ENCODE measurements at regions of chr1 and their contacts with region 1.

Region 1: GRCh38 chr1:119675349-119676345 is 27.6 kb upstream of the ZNF697 start:
- DNase-seq: peak; percentile 88
- ATAC-seq: peak; percentile 93
- H3K4me3 ChIP-seq: peak overlapping the region; percentile 46
- H3K27ac ChIP-seq: no peak overlapping the region
- H3K4me1 ChIP-seq: no peaks in the 10 kb centered on the region
- H3K27me3 ChIP-seq: peaks cover 9% of the 10 kb centered on the region
- CTCF ChIP-seq: peak; percentile 86
- POLR2A ChIP-seq: no peak
- RAD21 ChIP-seq: peak; percentile 68

Region 2: DNA sequence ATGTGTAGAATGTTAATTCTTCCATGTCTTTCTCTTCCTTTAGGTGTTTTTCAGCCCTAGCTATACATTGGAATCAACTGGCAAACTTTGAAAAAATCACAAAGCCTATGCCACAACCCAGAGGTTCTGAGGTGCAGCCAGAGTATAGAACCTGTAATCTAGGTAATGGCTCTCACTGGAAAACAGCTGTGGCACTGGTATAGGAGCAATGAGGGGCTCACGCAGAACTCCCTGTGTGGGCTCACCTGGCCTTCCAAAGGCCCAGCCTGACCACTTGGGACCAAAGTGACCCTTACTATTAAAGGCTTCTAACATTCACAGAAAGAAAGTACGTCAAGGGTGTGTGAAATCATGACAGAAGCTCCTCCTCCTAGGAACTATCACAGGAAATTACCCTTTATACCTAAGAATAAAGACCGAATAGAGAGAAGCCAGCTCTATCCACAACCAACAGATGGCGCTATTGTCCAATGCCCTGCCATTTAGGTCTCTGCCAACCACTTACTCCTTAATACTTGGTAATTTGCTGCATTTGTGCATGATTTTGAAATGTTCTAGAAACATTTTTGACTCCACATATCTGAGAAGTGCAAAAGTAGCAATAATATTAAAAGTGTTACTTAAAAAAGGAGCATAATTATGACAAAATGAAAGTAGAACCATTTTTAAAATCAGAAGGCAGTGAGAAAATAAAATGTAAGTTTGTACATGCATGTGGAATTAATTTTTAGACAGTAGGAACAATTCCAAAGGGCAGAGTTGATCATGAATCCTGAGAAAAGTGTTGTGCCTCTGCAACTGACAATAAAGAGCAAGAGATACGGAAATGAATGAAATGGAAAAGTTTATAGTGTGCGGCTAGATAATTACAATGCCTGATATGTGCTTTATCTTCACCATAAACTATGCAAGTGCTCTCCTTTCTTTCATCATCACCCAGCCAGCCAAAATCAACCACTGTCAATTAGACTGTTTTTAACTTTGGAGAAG is 400.2 kb before region 1 on chr1:
- CTCF ChIA-PET with region 1: no interaction called
- POLR2A ChIA-PET with region 1: no interaction called
- dilution Hi-C with region 1: no loop called
- in situ Hi-C with region 1: loop called (anchors 25 kb)
- intact Hi-C with region 1: no loop called
- DNase-seq: peak; percentile 67
- ATAC-seq: peak; percentile 92
- H3K4me3 ChIP-seq: no peak overlapping the region
- H3K27ac ChIP-seq: no peak overlapping the region
- H3K4me1 ChIP-seq: peaks cover 4% of the 10 kb centered on the region
- H3K27me3 ChIP-seq: peaks cover 2% of the 10 kb centered on the region
- CTCF ChIP-seq: peak; percentile 91
- POLR2A ChIP-seq: no peak
- RAD21 ChIP-seq: peak; percentile 82

Region 3: GRCh38 chr1:119582801-119583200 is 92.8 kb before region 1 on chr1:
- CTCF ChIA-PET with region 1: no interaction called
- POLR2A ChIA-PET with region 1: no interaction called
- dilution Hi-C with region 1: no loop called
- in situ Hi-C with region 1: no loop called
- intact Hi-C with region 1: loop called (anchors 1 kb)
- DNase-seq: peak; percentile 55
- ATAC-seq: peak; percentile 98
- H3K4me3 ChIP-seq: no peak overlapping the region
- H3K27ac ChIP-seq: no peak overlapping the region
- H3K4me1 ChIP-seq: no peaks in the 10 kb centered on the region
- H3K27me3 ChIP-seq: peaks cover 12% of the 10 kb centered on the region
- CTCF ChIP-seq: peak; percentile 69
- POLR2A ChIP-seq: no peak
- RAD21 ChIP-seq: peak; percentile 77

Region 4: DNA sequence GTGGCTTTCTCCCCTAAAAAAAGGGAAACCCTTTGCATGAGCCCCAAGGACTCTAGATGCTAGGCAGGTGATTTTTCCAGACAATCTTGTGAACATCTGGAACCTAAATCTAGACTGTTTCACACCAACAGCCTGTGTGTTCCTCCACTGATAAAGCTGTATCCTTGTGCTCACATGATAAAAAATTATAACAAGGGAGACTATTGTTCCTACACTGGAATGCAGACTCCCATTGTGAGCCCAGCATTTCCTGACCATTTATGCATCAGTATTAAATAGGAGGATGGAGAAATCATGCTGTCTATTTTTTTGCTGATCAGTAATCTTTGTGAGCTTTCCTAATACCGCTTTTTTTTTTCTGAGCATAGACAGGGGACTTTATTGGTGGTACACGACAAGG is 80.0 kb before region 1 on chr1:
- CTCF ChIA-PET with region 1: no interaction called
- POLR2A ChIA-PET with region 1: no interaction called
- dilution Hi-C with region 1: no loop called
- in situ Hi-C with region 1: no loop called
- intact Hi-C with region 1: no loop called
- DNase-seq: no peak
- ATAC-seq: no peak
- H3K4me3 ChIP-seq: no peak overlapping the region
- H3K27ac ChIP-seq: no peak overlapping the region
- H3K4me1 ChIP-seq: no peaks in the 10 kb centered on the region
- H3K27me3 ChIP-seq: peaks cover 4% of the 10 kb centered on the region
- CTCF ChIP-seq: no peak
- POLR2A ChIP-seq: no peak
- RAD21 ChIP-seq: no peak

Region 5: DNA sequence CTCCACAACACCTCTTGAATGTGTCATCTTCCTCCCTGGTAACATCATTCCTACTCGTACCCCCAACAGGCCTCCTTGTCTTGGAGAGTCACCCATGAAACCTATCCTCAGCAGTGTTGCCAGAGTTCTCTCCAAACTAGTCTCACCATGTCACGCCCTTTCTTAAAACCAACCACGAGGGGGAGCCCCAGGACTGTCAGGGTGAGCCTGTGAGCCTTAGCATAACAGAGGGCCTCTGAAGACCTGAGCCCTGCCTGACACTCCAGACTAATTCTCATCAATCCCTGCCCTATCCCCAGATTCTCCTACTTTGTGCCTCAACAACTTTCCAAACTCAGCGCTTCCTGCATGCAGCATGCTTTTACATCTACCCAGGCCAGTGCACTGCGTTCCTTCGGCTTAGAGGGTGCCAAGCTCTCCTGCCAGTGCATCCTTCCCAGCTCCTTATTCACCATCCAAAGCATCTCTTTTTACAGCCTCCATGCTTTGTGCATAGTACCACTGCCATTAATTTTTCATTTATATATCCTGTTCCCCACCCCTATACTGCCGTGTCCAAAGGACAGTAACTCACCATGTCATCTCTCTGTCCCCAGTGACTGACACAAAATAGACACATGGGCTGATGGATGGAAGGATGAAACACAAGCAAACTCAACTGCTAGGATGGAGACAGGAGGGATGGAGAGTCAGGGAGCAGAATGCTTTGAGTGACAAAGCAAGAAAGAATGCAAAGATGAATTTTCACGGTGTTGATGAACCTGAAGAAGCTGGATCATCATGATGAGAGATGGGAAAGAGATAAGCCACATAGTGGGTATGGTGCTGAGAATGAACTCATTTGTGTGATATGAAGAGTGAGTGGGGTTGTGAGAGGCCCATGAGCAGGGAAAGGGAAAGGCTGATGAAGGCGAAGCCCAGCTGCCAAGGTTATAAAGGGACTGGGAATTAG is 61.6 kb before region 1 on chr1:
- CTCF ChIA-PET with region 1: interaction called, 14 read pairs
- POLR2A ChIA-PET with region 1: no interaction called
- dilution Hi-C with region 1: no loop called
- in situ Hi-C with region 1: no loop called
- intact Hi-C with region 1: loop called (anchors 1 kb)
- DNase-seq: peak; percentile 83
- ATAC-seq: peak; percentile 92
- H3K4me3 ChIP-seq: no peak overlapping the region
- H3K27ac ChIP-seq: no peak overlapping the region
- H3K4me1 ChIP-seq: peaks cover 2% of the 10 kb centered on the region; the same call in 1 of the 2 replicates
- H3K27me3 ChIP-seq: peaks cover 3% of the 10 kb centered on the region; the same call in 1 of the 2 replicates
- CTCF ChIP-seq: peak; percentile 88
- POLR2A ChIP-seq: no peak
- RAD21 ChIP-seq: peak; percentile 93

Region 6: DNA sequence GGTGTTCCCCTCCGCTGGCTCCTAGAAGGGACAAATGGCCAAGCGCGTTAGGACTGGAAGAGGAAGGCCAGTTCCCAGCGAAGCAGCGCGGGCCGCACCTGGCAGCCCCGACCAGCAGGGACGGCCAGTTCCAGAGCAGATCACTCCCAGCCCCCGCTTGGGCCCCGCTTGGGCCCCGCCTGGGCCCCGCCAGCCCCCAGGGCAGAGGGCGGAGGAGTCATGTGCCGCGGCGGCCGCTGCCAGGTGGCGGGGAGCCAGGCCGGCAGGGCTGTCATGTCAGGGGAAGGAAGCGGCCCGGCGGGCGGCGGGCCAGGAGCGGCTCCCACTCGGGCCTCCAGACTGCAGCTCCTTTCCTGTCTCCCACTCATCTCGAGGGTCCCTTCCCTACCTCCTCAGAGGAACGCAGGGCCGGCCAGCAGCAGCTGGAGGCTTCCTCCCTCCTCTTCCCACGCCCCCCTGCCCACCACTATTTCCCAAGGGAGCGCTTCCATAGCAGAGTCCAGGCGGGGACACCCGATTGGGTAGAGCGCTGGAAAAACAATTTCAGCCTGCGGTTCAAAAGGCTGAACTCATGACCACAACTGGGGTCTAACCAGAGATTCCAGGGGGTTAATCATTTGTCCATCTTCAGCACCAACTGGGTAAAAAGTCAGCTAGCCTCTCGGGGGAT is 44.1 kb before region 1 on chr1:
- CTCF ChIA-PET with region 1: no interaction called
- POLR2A ChIA-PET with region 1: no interaction called
- dilution Hi-C with region 1: no loop called
- in situ Hi-C with region 1: no loop called
- intact Hi-C with region 1: no loop called
- DNase-seq: peak; percentile 72
- ATAC-seq: peak; percentile 77
- H3K4me3 ChIP-seq: no peak overlapping the region
- H3K27ac ChIP-seq: peak overlapping the region; percentile 48; the same call in 1 of the 2 replicates
- H3K4me1 ChIP-seq: peaks cover 32% of the 10 kb centered on the region
- H3K27me3 ChIP-seq: no peaks in the 10 kb centered on the region
- CTCF ChIP-seq: no peak
- POLR2A ChIP-seq: no peak
- RAD21 ChIP-seq: no peak

Region 7: GRCh38 chr1:119662034-119662437 is 13.6 kb before region 1 on chr1:
- CTCF ChIA-PET with region 1: interaction called, 17 read pairs
- POLR2A ChIA-PET with region 1: no interaction called
- dilution Hi-C with region 1: no loop called
- in situ Hi-C with region 1: no loop called
- intact Hi-C with region 1: loop called (anchors 2 kb)
- DNase-seq: no peak
- ATAC-seq: no peak
- H3K4me3 ChIP-seq: no peak overlapping the region
- H3K27ac ChIP-seq: no peak overlapping the region
- H3K4me1 ChIP-seq: peaks cover 2% of the 10 kb centered on the region; the same call in 1 of the 2 replicates
- H3K27me3 ChIP-seq: peaks cover 11% of the 10 kb centered on the region
- CTCF ChIP-seq: no peak
- POLR2A ChIP-seq: no peak
- RAD21 ChIP-seq: no peak

Region 8: GRCh38 chr1:119766374-119766794 is 90.7 kb after region 1 on chr1:
- CTCF ChIA-PET with region 1: no interaction called
- POLR2A ChIA-PET with region 1: no interaction called
- dilution Hi-C with region 1: no loop called
- in situ Hi-C with region 1: no loop called
- intact Hi-C with region 1: no loop called
- DNase-seq: no peak
- ATAC-seq: peak; percentile 29; the same call in 1 of the 2 replicates
- H3K4me3 ChIP-seq: no peak overlapping the region
- H3K27ac ChIP-seq: no peak overlapping the region
- H3K4me1 ChIP-seq: peaks cover 2% of the 10 kb centered on the region; the same call in 1 of the 2 replicates
- H3K27me3 ChIP-seq: peaks cover 22% of the 10 kb centered on the region
- CTCF ChIP-seq: no peak
- POLR2A ChIP-seq: no peak
- RAD21 ChIP-seq: no peak

Region 9: DNA sequence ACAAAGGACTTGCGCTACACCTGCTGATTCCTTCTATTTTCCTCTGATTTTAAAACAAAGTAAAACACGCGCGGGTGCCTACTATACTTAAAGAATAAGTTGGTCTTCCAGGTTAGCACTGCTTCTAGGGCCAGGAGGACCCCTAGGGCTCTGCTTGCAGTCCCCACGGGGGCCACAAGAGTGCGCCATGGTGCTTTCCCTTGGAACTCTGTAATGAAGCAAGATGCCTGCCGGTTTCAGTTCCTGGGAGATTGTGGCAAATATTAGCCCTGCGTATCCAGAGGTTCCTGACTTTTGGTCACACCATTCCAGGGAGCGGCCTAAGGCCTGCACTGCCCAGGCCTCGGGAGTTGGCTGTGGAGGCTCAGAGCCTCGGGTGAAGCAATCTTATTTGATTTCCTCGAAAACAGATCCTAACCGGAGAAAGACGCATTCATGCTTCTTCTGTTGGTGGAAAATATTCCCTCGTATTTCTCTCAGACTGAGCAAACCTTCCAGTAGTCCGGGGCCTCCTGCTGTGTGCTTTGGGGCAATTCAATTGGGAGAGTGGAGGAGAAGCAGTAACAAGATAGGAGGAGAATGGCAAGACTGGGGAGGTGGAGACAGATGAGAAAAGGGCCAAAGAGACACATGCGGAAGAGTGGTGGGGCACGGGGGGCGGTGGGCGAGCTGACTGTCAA is 195.4 kb after region 1 on chr1:
- CTCF ChIA-PET with region 1: no interaction called
- POLR2A ChIA-PET with region 1: no interaction called
- dilution Hi-C with region 1: no loop called
- in situ Hi-C with region 1: no loop called
- intact Hi-C with region 1: no loop called
- DNase-seq: peak; percentile 72
- ATAC-seq: peak; percentile 90
- H3K4me3 ChIP-seq: no peak overlapping the region
- H3K27ac ChIP-seq: no peak overlapping the region
- H3K4me1 ChIP-seq: peaks cover 14% of the 10 kb centered on the region; the same call in 1 of the 2 replicates
- H3K27me3 ChIP-seq: no peaks in the 10 kb centered on the region
- CTCF ChIP-seq: peak; percentile 94
- POLR2A ChIP-seq: 0 out of 2 replicates have a peak, but pooled peaks have one; percentile 34
- RAD21 ChIP-seq: peak; percentile 96

Measured in IMR-90 (cell line).